Left cardiac atrium (tissue), 4 donors: ENCODE measurements at regions of chr10 and their contacts with region 1.

Region 1: DNA sequence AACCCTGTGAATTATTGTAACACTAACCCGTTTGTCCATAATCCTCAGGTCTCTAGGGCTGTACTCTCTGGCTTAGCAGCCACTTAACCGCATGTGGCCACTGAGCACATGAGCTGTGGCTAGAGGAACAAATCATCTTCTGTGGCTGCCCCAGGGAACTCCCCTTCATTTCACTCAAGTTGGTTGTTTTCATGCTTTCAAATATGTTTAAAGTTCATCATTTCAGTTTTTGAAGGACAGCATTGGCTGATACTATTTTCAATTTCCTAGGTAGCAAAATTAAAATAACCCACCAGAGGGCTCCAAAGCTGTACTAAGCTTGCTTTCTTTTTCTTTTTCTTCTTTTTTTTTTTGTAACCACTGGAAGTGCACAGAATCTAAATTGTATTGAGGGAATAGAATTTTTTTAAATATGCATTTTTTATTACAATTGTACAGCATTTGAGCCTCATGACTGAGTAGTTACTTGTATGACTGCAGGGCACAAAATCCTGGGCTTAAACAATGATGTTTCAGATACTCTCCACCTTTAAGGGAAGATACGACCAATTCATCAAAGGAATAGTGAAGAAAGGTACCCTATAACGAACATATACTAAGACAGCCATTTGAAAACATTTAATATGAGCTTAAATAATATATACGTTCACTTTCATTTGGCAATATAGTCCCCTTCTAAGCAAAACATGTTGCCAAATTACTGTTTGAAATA is 38.6 kb downstream of the MRC1 start:
- DNase-seq: no peak
- ATAC-seq: no peak

Region 2: GRCh38 chr10:18140149-18140956 is 292.6 kb after region 1 on chr10 and contains the start of gene CACNB2:
- intact Hi-C with region 1: loop called in 1 of 2 experiments (anchors 10 kb)
- DNase-seq: peak; percentile 76
- ATAC-seq: peak; percentile 85 to 87
- total RNA-seq, gene CACNB2: 23.7 to 34.3 TPM

Region 3: DNA sequence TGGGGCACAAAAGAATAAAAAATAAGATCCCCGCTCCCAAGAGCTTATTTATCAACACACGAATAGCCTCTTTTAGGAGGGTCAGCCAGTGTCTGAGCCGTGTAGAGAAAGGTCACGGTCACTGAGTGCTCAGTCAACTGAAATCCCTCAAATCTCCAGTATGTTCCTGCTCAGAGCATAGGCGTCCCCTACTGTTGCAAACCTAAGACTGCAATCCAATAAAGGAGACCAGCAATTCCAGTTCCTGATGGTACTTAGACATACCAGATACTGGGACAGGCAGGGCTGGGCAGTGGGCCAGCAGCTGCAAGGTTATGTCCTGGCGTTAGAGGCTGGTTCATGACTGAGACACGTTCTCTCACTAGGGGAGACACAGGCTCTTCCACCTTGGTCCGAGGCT is 386.0 kb after region 1 on chr10:
- intact Hi-C with region 1: loop called in 1 of 2 experiments (anchors 5 kb)
- DNase-seq: peak; percentile 56
- ATAC-seq: peak; percentile 73 to 89